AG04450 (cell line): ENCODE measurements at regions of chr17 and their contacts with region 1.

Region 1: DNA sequence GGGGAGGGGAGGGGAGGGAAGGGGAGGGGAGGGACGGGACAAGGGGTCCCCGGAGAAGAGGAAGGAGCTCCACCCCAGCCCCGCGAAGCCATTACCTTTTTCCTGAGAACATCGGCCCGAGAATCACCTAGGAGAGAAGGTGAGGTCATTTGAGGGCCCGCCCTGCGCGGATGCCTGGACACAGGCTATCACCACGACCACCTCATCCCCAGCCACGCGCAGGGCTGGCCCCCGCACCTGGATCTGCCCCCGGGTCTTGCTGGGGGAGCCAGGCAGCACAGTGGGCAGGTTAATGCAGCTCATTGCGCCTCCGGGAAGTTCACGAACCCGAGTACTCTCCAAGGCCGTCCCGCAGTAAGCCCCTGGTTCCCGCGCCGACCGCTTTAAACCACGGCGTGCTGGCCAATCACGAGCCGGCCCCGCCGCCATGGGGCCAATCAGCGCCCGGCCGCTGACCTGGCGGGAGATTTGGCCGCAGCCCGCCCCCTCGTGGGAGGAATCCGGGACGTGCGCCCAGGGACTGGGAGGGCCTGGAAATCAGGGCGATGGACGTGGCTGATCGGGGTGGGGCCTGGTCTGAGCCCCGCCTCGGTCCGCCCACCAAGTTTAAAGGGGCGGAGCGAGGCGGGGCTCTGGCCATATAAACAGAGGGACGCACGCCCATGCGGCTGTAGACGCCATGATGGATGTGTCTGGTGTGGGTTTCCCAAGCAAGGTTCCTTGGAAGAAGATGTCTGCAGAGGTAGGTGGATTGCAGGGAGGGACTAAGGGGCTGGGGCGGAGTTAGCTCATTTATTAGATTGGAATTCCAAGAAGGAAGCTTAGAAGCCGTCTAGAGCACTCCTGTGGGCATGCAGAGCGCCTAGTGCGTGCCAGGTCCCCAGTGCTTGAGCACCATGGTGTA is at the starts of genes AFMID and TK1:
- DNase-seq: peak; percentile 93
- H3K4me3 ChIP-seq: peak within 1 kb of the TSS; percentile 79
- H3K27ac ChIP-seq: peak within 1 kb of the TSS; percentile 21
- H3K27me3 ChIP-seq: no peaks in the 10 kb centered on the region
- CTCF ChIP-seq: peak; percentile 75
- polyA plus RNA-seq, gene AFMID: 26.2 and 30.2 TPM in 2 replicates
- polyA plus RNA-seq, gene TK1: 27.1 and 31.4 TPM in 2 replicates

Region 2: DNA sequence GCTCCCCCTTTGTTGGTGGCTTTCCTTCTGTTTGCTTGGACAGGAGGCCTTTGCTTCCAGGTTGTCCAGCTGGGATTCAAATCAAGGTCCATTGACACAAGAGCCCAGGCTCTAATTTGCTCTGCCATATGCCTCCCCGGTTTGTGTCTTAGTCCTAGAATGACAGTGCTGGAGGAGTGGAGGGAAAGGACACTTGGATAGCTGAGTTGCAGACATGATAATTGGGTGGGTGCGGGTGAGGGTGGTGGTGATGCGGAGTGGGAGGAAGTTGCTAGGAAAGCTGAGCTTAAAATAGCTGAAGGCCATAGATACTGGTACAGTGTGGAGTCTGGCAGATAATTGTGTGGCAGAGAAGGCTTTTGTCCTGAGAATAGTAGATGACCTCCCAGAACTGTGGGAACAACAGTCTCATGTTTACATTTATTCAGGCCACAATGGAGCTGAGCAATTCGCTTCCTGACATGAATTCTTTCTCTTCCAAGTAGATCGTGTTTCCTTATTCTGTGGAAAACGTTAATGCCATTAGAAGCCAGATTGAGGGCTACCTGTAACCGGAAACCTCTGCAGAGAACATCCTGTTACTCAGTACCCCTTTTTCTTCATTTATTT is 1022.4 kb before region 1 on chr17:
- CTCF ChIA-PET with region 1: no interaction called
- POLR2A ChIA-PET with region 1: interaction called, 11 read pairs
- DNase-seq: no peak
- H3K4me3 ChIP-seq: no peak overlapping the region
- H3K27ac ChIP-seq: peak overlapping the region; percentile 68
- H3K27me3 ChIP-seq: no peaks in the 10 kb centered on the region
- CTCF ChIP-seq: no peak

Region 3: GRCh38 chr17:78176548-78177025 is 10.4 kb before region 1 on chr17:
- CTCF ChIA-PET with region 1: interaction called, 31 read pairs
- POLR2A ChIA-PET with region 1: no interaction called
- DNase-seq: no peak
- H3K4me3 ChIP-seq: no peak overlapping the region
- H3K27ac ChIP-seq: no peak overlapping the region
- H3K27me3 ChIP-seq: no peaks in the 10 kb centered on the region
- CTCF ChIP-seq: peak; percentile 95

Region 4: DNA sequence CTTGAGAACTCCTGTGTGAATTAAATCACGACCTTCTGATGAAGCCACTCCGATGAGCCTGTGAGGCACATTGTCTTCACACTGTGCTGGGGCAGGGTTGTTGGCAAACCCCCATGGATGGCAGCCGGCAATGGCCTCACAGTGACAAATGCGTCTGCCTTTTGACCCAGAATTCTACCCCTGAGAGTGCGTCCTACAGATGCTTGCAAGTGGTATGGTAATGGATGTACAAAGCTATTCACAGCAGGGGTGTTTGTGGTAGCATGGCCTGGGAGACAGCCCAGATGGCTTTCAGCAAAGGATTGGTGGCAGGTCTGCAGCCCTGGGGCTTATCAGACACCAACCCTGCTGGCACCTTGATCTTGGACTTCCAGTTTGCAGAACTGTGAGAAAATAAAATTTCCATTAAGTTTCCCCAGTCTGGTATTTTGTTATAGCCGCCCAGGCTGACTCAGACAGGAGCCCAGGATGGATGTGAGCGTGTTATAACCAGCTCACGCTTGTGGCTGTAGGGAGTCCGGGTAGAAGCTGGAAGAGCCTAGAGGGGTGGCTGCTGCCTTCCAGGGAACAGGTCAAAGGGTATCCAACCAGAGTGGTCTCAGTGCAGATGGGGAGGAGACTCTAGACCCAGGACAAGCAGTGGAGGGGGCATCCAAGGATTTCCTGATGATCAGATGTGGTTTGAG is 10.3 kb after region 1 on chr17:
- CTCF ChIA-PET with region 1: interaction called, 24 read pairs
- POLR2A ChIA-PET with region 1: interaction called, 4 read pairs
- DNase-seq: no peak
- H3K4me3 ChIP-seq: no peak overlapping the region
- H3K27ac ChIP-seq: no peak overlapping the region
- H3K27me3 ChIP-seq: no peaks in the 10 kb centered on the region
- CTCF ChIP-seq: no peak

Region 5: DNA sequence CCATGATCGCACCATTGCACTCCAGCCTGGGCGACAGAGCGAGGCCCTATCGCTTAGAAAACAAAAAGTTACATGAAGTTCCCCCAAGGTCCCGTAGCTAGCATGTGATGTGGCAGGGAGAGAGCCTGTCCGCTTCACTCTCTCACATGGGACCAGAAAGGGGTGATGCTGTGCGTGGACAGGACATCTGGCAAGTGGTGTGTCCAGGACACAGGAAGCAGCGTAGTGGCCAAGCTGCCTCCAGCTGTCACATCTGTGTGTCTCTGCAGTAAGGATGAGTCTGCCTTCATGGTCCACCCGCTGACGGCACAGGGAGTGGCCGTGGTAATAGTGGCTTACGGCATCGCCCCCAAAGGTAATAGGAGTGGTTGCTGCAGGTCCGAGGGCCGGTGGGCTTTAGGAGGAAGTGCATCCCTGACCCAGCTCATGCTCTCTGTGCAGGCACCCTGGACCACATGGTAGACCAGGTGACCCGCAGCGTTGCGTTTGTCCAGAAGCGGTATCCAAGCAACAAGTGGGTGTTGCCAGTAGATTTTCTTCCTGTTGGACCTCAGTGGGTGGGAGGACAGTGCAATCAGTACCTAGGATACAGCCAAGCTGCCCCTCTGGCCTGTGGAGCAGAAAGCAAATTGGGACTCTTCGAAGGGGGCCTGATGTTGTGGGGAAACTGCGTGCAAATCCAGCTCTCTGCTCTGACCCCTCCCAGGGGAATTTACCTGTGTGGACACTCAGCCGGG is 17.6 kb after region 1 on chr17:
- CTCF ChIA-PET with region 1: interaction called, 24 read pairs
- POLR2A ChIA-PET with region 1: interaction called, 3 read pairs
- DNase-seq: no peak
- H3K4me3 ChIP-seq: no peak overlapping the region
- H3K27ac ChIP-seq: no peak overlapping the region
- H3K27me3 ChIP-seq: no peaks in the 10 kb centered on the region
- CTCF ChIP-seq: no peak

Region 6: GRCh38 chr17:78272181-78272913 is 85.4 kb after region 1 on chr17:
- CTCF ChIA-PET with region 1: no interaction called
- POLR2A ChIA-PET with region 1: no interaction called
- DNase-seq: peak; percentile 81
- H3K4me3 ChIP-seq: 0 out of 2 replicates have a peak overlapping the region, but pooled peaks have one; percentile 4
- H3K27ac ChIP-seq: peak overlapping the region; percentile 24
- H3K27me3 ChIP-seq: peaks cover 37% of the 10 kb centered on the region
- CTCF ChIP-seq: no peak